ENCODE measurements at regions of chr11 and their contacts with region 1.

Region 1: DNA sequence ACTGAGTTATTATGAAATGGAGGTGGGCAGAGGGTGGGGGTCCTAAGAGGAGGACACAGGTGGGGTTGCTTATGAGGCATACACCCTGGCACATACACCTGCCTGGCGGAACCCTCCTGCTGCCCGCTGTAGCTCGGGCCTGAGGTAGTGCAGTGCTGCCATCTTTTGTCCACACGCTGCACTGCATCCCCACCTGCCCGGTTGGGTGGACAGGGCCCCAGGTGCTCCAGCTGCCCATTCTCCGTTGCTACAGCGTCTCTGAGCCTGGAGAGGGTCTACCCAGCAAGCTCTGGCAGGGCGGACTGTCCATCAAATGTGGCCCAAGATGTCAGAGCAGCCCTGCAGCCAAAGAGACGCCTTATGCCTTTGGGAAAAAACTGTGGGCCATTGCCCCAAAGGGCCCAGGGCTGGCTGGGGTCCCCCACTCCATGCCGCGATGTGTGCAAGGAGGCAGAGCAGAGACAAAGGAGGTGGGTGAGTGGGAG is 131.2 kb downstream of the BUD13 start:
- DNase-seq: peak in 3 of 5 donors; percentile 14 to 34 (median 25)
- ATAC-seq: peak in 3 of 4 donors; percentile 66 to 71 (median 70)
- H3K4me3 ChIP-seq: no peak overlapping the region
- H3K27ac ChIP-seq: no peak overlapping the region
- H3K4me1 ChIP-seq: no peaks in the 10 kb centered on the region
- H3K27me3 ChIP-seq: peaks cover 0 to 8% (median 3%) of the 10 kb centered on the region in 9 donors
- CTCF ChIP-seq: peak; percentile 34 to 72 (median 60)
- POLR2A ChIP-seq: no peak

Region 2: GRCh38 chr11:116086426-116086825 is 555.2 kb before region 1 on chr11:
- intact Hi-C with region 1: no loop called
- DNase-seq: no peak
- ATAC-seq: no peak
- H3K4me3 ChIP-seq: no peak overlapping the region
- H3K27ac ChIP-seq: no peak overlapping the region
- H3K4me1 ChIP-seq: no peaks in the 10 kb centered on the region
- H3K27me3 ChIP-seq: peaks cover 0 to 38% (median 3%) of the 10 kb centered on the region in 9 donors
- CTCF ChIP-seq: no peak
- POLR2A ChIP-seq: no peak

Region 3: DNA sequence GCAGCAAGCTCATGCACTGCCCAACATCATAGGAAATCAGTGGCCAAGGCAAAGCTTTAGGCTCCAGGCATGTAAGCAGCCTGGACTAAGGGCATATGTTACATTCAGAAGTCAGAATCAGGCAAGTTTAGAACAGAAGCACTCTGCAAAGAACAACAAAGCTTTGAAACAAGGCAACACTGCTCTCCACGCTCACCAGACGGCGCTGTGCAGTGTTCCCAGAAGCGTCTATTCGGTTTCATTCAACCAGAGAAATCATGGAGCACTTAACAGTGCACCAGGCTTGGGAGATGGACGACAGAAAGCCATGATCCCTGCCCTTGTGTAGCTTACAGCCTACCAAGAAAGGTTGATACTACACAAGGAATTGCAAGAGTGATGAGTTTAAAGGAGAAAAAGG is 424.6 kb before region 1 on chr11:
- intact Hi-C with region 1: loop called in 1 of 10 experiments (anchors 5 kb)
- DNase-seq: peak in 1 of 5 donors; percentile 42
- ATAC-seq: peak in 2 of 4 donors; percentile 16 to 64
- H3K4me3 ChIP-seq: no peak overlapping the region
- H3K27ac ChIP-seq: no peak overlapping the region
- H3K4me1 ChIP-seq: peaks cover 0 to 7% (median 0%) of the 10 kb centered on the region in 12 donors
- H3K27me3 ChIP-seq: no peaks in the 10 kb centered on the region
- CTCF ChIP-seq: peak in 11 of 12 donors; percentile 40 to 83 (median 61)
- POLR2A ChIP-seq: no peak

Region 4: GRCh38 chr11:116454020-116454645 is 187.5 kb before region 1 on chr11:
- intact Hi-C with region 1: loop called (anchors 1 to 5 kb)
- DNase-seq: peak in 3 of 5 donors; percentile 28 to 44 (median 39)
- ATAC-seq: peak in 3 of 4 donors; percentile 58 to 64 (median 59)
- H3K4me3 ChIP-seq: no peak overlapping the region
- H3K27ac ChIP-seq: no peak overlapping the region
- H3K4me1 ChIP-seq: no peaks in the 10 kb centered on the region
- H3K27me3 ChIP-seq: peaks cover 0 to under 1% (median 0%) of the 10 kb centered on the region in 9 donors
- CTCF ChIP-seq: peak; percentile 29 to 64 (median 48)
- POLR2A ChIP-seq: no peak

Region 5: DNA sequence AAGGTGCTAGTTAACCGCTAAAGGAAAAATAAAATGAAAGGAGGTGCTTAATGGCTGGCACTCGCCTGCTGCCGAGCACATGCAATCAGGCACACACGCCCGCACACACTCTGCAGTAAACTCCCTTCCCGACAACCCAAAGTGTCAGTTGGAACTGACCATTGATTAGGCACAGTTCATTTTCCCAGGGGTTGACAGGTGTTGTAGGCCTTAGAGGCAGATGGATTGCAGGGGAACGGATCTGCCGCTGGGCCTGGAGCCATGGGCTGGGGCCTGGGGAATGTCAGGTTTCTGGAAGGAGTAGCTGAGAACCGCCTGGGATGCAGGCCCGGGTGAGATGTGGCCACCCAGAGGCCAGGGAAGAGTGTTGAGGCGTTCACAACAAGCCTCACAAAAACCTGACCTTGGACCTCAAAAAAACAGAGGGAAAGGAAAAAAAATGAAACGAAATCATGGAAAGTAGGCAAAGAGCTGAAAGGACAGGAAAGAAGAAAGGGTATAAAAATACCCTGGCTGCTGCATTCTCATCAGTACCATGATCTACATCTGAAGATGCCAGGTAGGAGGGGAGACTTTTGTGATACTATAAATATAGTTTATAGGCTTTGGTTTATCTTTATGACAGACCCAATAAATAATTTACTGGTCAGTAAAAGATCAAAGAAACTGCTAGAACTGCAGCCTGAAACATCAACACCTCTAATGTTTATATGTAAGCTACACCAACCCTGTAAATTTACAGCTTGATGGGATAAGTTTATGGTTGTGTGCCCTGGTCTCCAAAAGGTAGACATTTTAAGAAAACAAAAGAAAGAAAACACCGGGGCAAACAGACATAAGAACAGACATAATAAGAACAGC is 182.2 kb before region 1 on chr11:
- intact Hi-C with region 1: loop called in 9 of 10 experiments (anchors 1 to 5 kb)
- DNase-seq: no peak
- ATAC-seq: peak in 2 of 4 donors; percentile 24 to 53
- H3K4me3 ChIP-seq: no peak overlapping the region
- H3K27ac ChIP-seq: peak overlapping the region in 1 of 12 donors; percentile 51
- H3K4me1 ChIP-seq: no peaks in the 10 kb centered on the region
- H3K27me3 ChIP-seq: peaks cover 0 to 8% (median 0%) of the 10 kb centered on the region in 9 donors
- CTCF ChIP-seq: no peak
- POLR2A ChIP-seq: no peak

Region 6: DNA sequence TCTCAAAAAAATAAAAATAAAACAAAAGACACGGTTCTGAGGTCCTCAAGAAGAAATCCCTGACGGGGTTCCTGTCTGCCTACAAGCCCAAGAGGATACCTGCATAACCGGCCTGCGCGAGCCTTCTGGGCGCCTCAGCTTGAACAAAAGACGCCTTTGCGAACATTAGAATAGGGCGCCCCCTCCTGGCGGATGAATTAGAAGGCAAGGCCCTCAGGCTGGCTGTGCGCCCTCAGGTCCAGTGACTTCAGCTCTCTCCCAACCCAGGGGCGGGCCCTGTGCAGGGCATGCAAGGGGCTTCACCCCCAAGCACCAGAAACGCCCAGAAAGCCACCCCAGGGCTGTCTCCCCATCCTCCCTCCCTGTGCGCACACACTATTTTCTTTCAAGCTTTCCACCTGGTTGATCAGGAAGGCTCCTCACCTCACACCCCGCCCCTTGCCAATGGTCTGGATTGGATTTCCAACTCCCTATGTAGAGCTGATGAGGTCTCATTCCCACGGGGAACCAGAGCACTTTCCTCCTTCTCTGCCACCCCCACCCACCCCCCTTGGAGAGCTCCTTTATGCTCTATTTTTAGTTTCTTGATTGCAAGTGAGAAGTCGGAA is 142.1 kb before region 1 on chr11:
- intact Hi-C with region 1: loop called in 1 of 10 experiments (anchors 5 kb)
- DNase-seq: peak; percentile 58 to 80 (median 66)
- ATAC-seq: peak in 3 of 4 donors; percentile 42 to 71 (median 62)
- H3K4me3 ChIP-seq: no peak overlapping the region
- H3K27ac ChIP-seq: no peak overlapping the region
- H3K4me1 ChIP-seq: peaks cover 0 to 12% (median 0%) of the 10 kb centered on the region in 12 donors
- H3K27me3 ChIP-seq: peaks cover 0 to 45% (median 12%) of the 10 kb centered on the region in 9 donors
- CTCF ChIP-seq: peak; percentile 45 to 71 (median 53)
- POLR2A ChIP-seq: no peak

Region 7: DNA sequence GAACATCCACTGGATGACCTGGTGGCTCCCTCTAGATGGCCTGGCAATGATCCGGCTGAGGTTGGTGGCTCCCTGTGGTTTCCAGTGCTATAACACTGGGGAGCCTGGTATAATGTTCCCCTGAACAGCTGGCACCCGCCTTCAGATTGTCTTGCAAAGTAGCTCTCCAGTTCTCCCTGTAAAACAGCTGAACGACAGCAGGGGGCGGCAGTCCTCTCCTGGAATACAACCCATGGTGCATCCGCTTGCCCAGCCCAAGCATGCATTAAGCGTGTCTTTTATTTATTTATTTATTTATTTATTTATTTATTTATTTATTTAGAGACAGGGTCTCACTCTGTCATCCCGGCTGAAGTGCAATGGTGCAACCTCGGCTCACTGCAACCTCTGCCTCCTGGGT is 127.7 kb before region 1 on chr11:
- intact Hi-C with region 1: loop called in 2 of 10 experiments (anchors 5 kb)
- DNase-seq: no peak
- ATAC-seq: no peak
- H3K4me3 ChIP-seq: no peak overlapping the region
- H3K27ac ChIP-seq: no peak overlapping the region
- H3K4me1 ChIP-seq: no peaks in the 10 kb centered on the region
- H3K27me3 ChIP-seq: peaks cover 0 to 35% (median 8%) of the 10 kb centered on the region in 9 donors
- CTCF ChIP-seq: peak in 4 of 12 donors; percentile 16 to 39 (median 27)
- POLR2A ChIP-seq: no peak

Region 8: GRCh38 chr11:117259417-117259816 is 617.8 kb after region 1 on chr11:
- intact Hi-C with region 1: no loop called
- DNase-seq: no peak
- ATAC-seq: no peak
- H3K4me3 ChIP-seq: no peak overlapping the region
- H3K27ac ChIP-seq: no peak overlapping the region
- H3K4me1 ChIP-seq: no peaks in the 10 kb centered on the region
- H3K27me3 ChIP-seq: no peaks in the 10 kb centered on the region
- CTCF ChIP-seq: no peak
- POLR2A ChIP-seq: no peak

Measured in heart left ventricle (tissue), 16 donors.